ENCODE measurements at regions of chr1 and their contacts with region 1.

Region 1: DNA sequence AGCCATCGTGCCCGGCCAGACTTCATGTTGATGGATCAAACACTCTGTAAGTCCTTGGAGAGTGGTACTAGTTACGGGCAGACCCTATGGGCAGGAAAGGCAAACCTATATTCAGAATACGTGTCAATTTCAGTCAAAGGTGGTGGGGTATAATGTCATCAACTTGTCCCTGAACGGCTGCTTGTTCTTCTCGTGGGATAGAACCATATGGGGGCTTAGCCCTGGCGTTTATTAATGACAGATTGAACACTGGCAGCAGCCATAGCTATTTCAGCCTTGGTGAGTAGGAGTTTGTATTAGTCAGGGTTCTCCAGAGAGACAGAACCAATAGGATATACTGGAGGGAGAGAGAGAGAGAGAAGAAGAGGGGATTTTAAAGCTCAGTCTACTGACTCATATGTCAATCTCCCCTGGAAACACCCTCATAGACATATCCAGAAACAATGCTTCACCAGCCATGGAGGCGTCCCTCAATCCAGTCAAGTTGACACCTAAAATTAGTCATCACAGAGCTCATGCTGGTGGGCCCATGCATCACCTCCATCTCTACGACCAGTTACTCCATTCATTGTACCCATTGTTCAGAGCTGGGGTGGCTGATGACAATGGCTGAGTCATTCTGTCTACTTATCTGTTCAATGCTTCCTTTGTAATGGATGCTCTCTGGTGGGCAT is 16.1 kb upstream of the AQP10 start:
- DNase-seq: no peak
- H3K4me3 ChIP-seq: no peak overlapping the region
- H3K4me3 Mint-ChIP-seq: no peak overlapping the region
- H3K27ac ChIP-seq: no peak overlapping the region
- H3K27ac Mint-ChIP-seq: no peak overlapping the region
- H3K4me1 ChIP-seq: no peaks in the 10 kb centered on the region
- H3K4me1 Mint-ChIP-seq: no peaks in the 10 kb centered on the region
- H3K27me3 ChIP-seq: no peaks in the 10 kb centered on the region
- H3K27me3 Mint-ChIP-seq: peaks cover 2 to 9% (median 3%) of the 10 kb centered on the region in 3 donors
- CTCF ChIP-seq: no peak

Region 2: GRCh38 chr1:153506831-153507413 is 797.9 kb before region 1 on chr1:
- intact Hi-C with region 1: no loop called
- DNase-seq: no peak
- H3K4me3 ChIP-seq: no peak overlapping the region
- H3K4me3 Mint-ChIP-seq: no peak overlapping the region
- H3K27ac ChIP-seq: no peak overlapping the region
- H3K27ac Mint-ChIP-seq: no peak overlapping the region
- H3K4me1 ChIP-seq: peaks cover 4 to 7% of the 10 kb centered on the region in 2 donors
- H3K4me1 Mint-ChIP-seq: peaks cover 12% of the 10 kb centered on the region
- H3K27me3 ChIP-seq: no peaks in the 10 kb centered on the region
- H3K27me3 Mint-ChIP-seq: peaks cover 0 to 9% (median 3%) of the 10 kb centered on the region in 3 donors
- CTCF ChIP-seq: no peak

Region 3: DNA sequence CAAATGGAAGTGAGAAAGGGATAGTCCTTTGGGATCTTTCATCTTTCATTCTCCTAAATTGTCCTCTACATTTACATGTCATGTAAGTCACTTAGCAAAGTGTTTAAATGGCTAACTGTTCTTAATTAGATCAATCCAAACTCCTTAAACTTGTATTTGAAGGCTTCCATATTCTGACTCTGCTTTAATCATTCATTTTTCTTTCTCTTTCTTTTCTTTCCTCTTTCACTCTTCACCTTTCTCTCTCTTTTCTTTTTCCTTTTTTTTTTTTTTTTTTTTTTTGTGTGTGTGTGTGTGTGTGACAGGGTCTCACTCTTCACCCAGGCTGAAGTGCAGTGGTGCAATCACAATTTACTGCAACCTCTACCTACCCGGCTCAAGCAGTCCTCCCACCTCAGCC is 242.5 kb before region 1 on chr1:
- intact Hi-C with region 1: loop called in 1 of 2 experiments (anchors 5 kb)
- DNase-seq: no peak
- H3K4me3 ChIP-seq: no peak overlapping the region
- H3K4me3 Mint-ChIP-seq: no peak overlapping the region
- H3K27ac ChIP-seq: no peak overlapping the region
- H3K27ac Mint-ChIP-seq: no peak overlapping the region
- H3K4me1 ChIP-seq: no peaks in the 10 kb centered on the region
- H3K4me1 Mint-ChIP-seq: no peaks in the 10 kb centered on the region
- H3K27me3 ChIP-seq: no peaks in the 10 kb centered on the region
- H3K27me3 Mint-ChIP-seq: peaks cover 2 to 8% (median 3%) of the 10 kb centered on the region in 3 donors
- CTCF ChIP-seq: no peak